Activated CD4-positive, alpha-beta T cell treated with anti-CD3 and anti-CD28 coated beads, Interleukin-2, amount 10 ng/mL, durations not matched to agents 7 days and 5 days (primary cell): ENCODE measurements at regions of chr1 and their contacts with region 1.

Region 1: DNA sequence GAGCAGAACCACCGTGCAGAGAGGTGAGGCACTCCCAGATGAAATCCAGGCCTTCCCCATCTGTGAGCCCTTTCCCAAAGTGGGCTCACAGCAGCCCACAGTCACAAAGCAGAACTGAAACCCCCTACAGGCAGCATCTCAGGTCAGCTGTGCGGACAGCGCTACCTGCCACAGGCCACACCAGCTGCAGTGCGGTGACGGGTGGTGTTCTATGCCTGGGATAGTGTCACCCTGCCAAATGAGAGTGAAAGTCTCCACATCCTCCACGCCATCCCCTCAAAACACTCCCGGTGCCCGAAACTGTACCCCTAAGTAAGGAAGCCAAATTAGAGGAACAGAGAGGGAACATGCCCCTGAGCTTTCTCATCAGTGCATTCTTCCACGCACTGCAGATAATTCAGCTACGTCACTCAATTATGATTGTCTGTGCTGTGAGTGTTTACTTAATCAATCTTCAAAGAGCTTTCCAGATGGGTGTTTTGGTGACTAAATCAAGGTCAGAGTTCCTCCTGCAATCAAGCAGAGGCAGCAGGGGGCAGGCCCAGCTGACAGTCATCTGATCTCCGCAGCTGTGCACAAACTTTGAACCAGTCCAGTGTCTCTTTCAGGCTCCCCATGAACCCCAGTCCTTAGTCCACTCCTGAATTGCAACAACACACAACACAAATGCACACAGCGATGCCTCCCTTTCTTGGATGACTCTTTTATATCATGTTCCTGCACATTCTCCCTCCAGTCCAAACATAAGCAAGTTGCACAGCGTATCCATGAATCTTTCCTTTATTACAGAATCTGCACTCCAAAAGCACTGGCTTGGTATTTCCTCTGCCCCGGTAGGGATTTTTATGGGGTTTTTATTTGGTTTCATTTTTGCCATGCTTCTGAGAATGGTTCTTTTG is 150.0 kb downstream of the TOMM20 start:
- DNase-seq: peak; percentile 31
- H3K4me3 Mint-ChIP-seq: peak overlapping the region; percentile 31
- H3K27ac Mint-ChIP-seq: peak overlapping the region; percentile 87
- H3K4me1 Mint-ChIP-seq: peaks cover 76% of the 10 kb centered on the region
- H3K27me3 Mint-ChIP-seq: no peaks in the 10 kb centered on the region

Region 2: GRCh38 chr1:234968451-234968850 is 10.2 kb before region 1 on chr1:
- CTCF ChIA-PET with region 1: interaction called, 10 read pairs
- POLR2A ChIA-PET with region 1: no interaction called
- DNase-seq: no peak
- H3K4me3 Mint-ChIP-seq: no peak overlapping the region
- H3K27ac Mint-ChIP-seq: no peak overlapping the region
- H3K4me1 Mint-ChIP-seq: peaks cover 68% of the 10 kb centered on the region
- H3K27me3 Mint-ChIP-seq: no peaks in the 10 kb centered on the region

Region 3: DNA sequence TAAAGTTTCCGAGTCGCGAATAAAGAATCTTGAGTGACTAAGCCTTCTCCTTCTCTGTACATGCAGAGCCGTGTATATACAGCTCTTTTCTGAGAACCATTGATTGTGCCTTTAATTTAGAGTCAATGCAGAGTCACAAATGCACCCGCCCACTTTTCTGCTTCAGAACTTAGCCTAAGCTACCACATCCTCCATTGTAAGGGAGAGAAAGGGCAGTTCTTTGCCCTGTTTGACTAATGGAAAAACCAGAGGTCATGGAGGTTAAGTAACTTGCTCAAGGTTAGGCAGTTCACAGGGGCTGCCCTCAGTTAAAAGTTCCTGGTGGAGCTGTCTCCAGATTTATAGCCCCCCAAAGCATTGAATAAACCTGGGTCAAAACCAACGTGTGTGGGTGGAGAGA is 10.4 kb after region 1 on chr1:
- CTCF ChIA-PET with region 1: interaction called, 14 read pairs
- POLR2A ChIA-PET with region 1: no interaction called
- DNase-seq: no peak
- H3K4me3 Mint-ChIP-seq: no peak overlapping the region
- H3K27ac Mint-ChIP-seq: no peak overlapping the region
- H3K4me1 Mint-ChIP-seq: peaks cover 60% of the 10 kb centered on the region
- H3K27me3 Mint-ChIP-seq: no peaks in the 10 kb centered on the region

Region 4: GRCh38 chr1:235011599-235012435 is 33.2 kb after region 1 on chr1:
- CTCF ChIA-PET with region 1: interaction called, 5 read pairs
- POLR2A ChIA-PET with region 1: interaction called, 14 read pairs
- DNase-seq: peak; percentile 96
- H3K4me3 Mint-ChIP-seq: peak overlapping the region; percentile 61
- H3K27ac Mint-ChIP-seq: peak overlapping the region; percentile 94
- H3K4me1 Mint-ChIP-seq: peaks cover 88% of the 10 kb centered on the region
- H3K27me3 Mint-ChIP-seq: no peaks in the 10 kb centered on the region